PC-9 (cell line): ENCODE measurements at regions of chr3 and their contacts with region 1.

Region 1: GRCh38 chr3:45635477-45636256 is 41.1 kb downstream of the LIMD1 start:
- DNase-seq: peak; percentile 61 to 85
- H3K4me3 ChIP-seq: no peak overlapping the region
- H3K27ac ChIP-seq: peak overlapping the region; percentile 60
- H3K4me1 ChIP-seq: peaks cover 44% of the 10 kb centered on the region
- H3K27me3 ChIP-seq: no peaks in the 10 kb centered on the region
- CTCF ChIP-seq: no peak

Region 2: GRCh38 chr3:45426161-45426560 is 209.5 kb before region 1 on chr3:
- CTCF ChIA-PET with region 1: interaction called, 15 read pairs
- POLR2A ChIA-PET with region 1: no interaction called
- intact Hi-C with region 1: no loop called
- DNase-seq: peak in 1 of 2 experiments; percentile 4
- H3K4me3 ChIP-seq: no peak overlapping the region
- H3K27ac ChIP-seq: no peak overlapping the region
- H3K4me1 ChIP-seq: no peaks in the 10 kb centered on the region
- H3K27me3 ChIP-seq: no peaks in the 10 kb centered on the region
- CTCF ChIP-seq: no peak

Region 3: DNA sequence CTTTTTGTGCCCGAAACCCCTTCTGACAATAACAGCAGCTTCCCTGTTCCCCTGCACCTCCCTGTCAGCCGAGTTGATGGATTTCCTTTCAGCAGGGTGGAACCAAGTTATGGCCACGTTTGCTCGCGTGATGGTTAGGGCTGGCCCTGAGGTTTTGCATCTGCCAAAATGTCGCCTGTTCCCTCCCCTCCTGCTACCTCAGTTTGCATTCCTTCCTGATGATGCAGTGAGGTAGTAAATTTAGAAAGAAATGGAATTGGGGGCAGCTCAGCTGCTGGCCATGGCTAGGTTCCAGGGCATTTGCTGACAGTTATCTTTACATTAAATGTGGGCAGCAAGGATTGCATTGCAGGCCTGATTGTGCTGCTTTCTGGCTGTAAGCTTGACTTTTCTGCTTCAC is 27.9 kb before region 1 on chr3:
- CTCF ChIA-PET with region 1: interaction called, 11 read pairs
- POLR2A ChIA-PET with region 1: no interaction called
- intact Hi-C with region 1: no loop called
- DNase-seq: no peak
- H3K4me3 ChIP-seq: no peak overlapping the region
- H3K27ac ChIP-seq: peak overlapping the region; percentile 58
- H3K4me1 ChIP-seq: peaks cover 27% of the 10 kb centered on the region
- H3K27me3 ChIP-seq: no peaks in the 10 kb centered on the region
- CTCF ChIP-seq: no peak

Region 4: GRCh38 chr3:45688882-45689756 is 53.5 kb after region 1 on chr3 and contains the start of gene SACM1L:
- CTCF ChIA-PET with region 1: no interaction called
- POLR2A ChIA-PET with region 1: no interaction called
- intact Hi-C with region 1: no loop called
- DNase-seq: peak; percentile 94 to 96
- H3K4me3 ChIP-seq: peak within 1 kb of the TSS; percentile 97
- H3K27ac ChIP-seq: peak within 1 kb of the TSS; percentile 76
- H3K4me1 ChIP-seq: peaks cover 16% of the 10 kb centered on the region; the same call in 1 of the 2 replicates
- H3K27me3 ChIP-seq: no peaks in the 10 kb centered on the region
- CTCF ChIP-seq: no peak
- total RNA-seq, gene SACM1L: 29.9 and 33.9 TPM in 2 replicates